ENCODE measurements at regions of chr7 and their contacts with region 1.

Region 1: DNA sequence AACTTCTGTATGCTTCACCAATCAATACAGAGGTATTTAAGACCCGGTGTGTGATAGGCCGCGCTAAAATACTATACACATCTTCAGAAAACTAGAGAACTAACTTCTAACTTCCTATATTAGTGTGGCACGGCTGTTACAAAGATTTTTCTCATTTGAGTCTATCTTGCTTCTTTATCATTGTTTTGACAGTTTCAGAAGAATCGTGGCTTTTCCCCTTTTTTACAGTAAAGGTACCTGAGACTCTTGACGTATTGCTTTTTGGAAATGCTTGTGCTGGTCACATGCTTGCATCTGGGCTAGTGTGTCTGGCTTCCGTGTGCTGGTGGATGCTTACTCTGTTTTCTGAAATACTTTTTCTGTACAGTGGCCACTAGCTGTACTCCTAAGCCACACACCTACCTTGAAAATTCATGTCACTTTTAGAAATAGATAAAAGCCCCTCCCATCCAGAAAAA is 12.7 kb downstream of the IKZF1 start:
- DNase-seq: no peak
- ATAC-seq: peak; percentile 63
- H3K4me3 Mint-ChIP-seq: peak overlapping the region; percentile 74
- H3K27ac Mint-ChIP-seq: peak overlapping the region; percentile 96
- H3K4me1 Mint-ChIP-seq: peaks cover 96% of the 10 kb centered on the region
- H3K27me3 Mint-ChIP-seq: no peaks in the 10 kb centered on the region
- CTCF ChIP-seq: no peak

Region 2: DNA sequence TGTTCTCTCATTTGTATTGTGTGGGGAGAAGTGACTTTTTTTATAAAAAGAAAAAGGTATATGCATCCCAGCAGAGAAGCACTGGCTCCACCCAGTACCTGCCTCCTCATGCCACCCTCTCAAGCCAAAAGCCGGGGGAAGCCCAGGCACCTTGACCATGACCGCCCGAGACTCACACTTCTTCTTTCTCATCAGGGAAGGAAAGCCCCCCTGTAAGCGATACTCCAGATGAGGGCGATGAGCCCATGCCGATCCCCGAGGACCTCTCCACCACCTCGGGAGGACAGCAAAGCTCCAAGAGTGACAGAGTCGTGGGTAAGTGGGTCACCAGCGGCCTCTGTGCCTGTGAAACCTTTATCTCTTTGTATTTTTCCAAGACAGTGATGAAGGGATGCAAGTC is 10.2 kb after region 1 on chr7:
- CTCF ChIA-PET with region 1: interaction called, 3 read pairs
- POLR2A ChIA-PET with region 1: interaction called, 153 read pairs
- intact Hi-C with region 1: loop called (anchors 1 kb)
- DNase-seq: no peak
- ATAC-seq: peak; percentile 61
- H3K4me3 Mint-ChIP-seq: peak overlapping the region; percentile 66
- H3K27ac Mint-ChIP-seq: peak overlapping the region; percentile 90
- H3K4me1 Mint-ChIP-seq: peaks cover 59% of the 10 kb centered on the region
- H3K27me3 Mint-ChIP-seq: no peaks in the 10 kb centered on the region
- CTCF ChIP-seq: no peak

Region 3: DNA sequence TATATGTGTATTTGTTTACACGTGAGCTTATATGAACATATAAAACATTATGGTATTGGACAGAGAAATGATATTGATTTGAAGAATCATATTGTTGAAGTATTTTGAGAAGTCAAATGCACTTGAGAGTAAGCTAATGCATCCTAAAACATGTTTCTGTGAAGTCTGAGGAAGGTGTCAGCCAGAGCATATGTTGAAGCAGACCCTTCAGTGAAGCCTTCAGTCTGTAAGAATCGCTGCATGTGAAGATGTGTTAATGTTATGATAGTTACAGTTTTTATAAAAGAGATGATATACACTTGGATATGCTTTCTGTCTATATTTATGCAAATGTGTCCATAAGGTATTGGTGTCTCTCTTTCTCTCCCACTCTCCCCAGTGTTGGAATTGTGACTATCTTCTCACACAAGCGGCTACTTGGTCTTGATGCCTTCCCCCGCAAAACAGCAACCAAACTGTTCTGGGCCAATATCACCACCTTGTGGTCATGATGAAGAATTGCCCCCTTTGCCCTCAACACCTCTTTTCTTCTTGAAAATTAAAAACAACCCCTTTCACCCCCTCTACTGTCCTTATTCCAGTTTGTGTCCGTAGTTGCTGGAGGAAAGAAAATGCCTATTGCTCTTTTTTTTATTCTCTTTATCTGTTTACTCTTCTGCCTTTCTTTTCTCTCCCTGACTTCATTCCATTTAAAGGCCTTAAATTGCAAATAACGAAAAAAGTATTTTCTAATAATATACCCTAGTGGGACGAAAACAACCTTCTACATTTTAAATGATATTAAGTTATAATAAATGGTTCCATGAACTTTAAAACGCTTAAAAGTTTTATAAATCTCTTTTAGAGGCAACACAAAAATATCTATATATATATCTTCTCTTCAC is 52.1 kb after region 1 on chr7:
- CTCF ChIA-PET with region 1: interaction called, 6 read pairs
- POLR2A ChIA-PET with region 1: interaction called, 88 read pairs
- intact Hi-C with region 1: loop called (anchors 2 kb)
- DNase-seq: no peak
- ATAC-seq: peak; percentile 66
- H3K4me3 Mint-ChIP-seq: no peak overlapping the region
- H3K27ac Mint-ChIP-seq: peak overlapping the region; percentile 74
- H3K4me1 Mint-ChIP-seq: peaks cover 94% of the 10 kb centered on the region
- H3K27me3 Mint-ChIP-seq: no peaks in the 10 kb centered on the region
- CTCF ChIP-seq: peak; percentile 50

Region 4: GRCh38 chr7:50653126-50653864 is 336.0 kb after region 1 on chr7:
- CTCF ChIA-PET with region 1: no interaction called
- POLR2A ChIA-PET with region 1: no interaction called
- intact Hi-C with region 1: no loop called
- DNase-seq: no peak
- ATAC-seq: no peak
- H3K4me3 Mint-ChIP-seq: no peak overlapping the region
- H3K27ac Mint-ChIP-seq: no peak overlapping the region
- H3K4me1 Mint-ChIP-seq: peaks cover 9% of the 10 kb centered on the region
- H3K27me3 Mint-ChIP-seq: peaks cover 7% of the 10 kb centered on the region
- CTCF ChIP-seq: no peak